ENCODE measurements at regions of chr3 and their contacts with region 1.

Region 1: DNA sequence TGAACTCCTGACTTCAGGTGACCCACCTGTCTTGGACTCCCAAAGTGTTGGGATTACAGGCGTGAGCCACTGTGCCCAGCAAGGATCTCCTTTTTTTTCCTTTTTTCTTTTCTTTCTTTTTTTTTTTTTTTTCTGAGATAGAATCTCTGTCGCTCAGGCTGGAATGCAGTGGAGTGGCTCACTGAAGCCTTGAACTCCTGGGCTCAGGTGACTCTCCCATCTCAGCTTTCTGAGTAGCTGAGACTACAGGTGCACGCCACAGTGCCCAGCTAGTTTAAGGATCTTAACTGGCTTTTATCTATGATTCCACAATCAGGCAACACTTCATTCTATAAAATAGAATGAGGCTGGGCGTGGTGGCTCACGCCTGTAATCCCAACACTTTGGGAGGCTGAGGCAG is 16.3 kb upstream of the NICN1 start:
- H3K4me3 Mint-ChIP-seq: no peak overlapping the region
- H3K27ac Mint-ChIP-seq: peak overlapping the region; percentile 86
- H3K4me1 Mint-ChIP-seq: peaks cover 25% of the 10 kb centered on the region
- H3K27me3 Mint-ChIP-seq: no peaks in the 10 kb centered on the region

Region 2: DNA sequence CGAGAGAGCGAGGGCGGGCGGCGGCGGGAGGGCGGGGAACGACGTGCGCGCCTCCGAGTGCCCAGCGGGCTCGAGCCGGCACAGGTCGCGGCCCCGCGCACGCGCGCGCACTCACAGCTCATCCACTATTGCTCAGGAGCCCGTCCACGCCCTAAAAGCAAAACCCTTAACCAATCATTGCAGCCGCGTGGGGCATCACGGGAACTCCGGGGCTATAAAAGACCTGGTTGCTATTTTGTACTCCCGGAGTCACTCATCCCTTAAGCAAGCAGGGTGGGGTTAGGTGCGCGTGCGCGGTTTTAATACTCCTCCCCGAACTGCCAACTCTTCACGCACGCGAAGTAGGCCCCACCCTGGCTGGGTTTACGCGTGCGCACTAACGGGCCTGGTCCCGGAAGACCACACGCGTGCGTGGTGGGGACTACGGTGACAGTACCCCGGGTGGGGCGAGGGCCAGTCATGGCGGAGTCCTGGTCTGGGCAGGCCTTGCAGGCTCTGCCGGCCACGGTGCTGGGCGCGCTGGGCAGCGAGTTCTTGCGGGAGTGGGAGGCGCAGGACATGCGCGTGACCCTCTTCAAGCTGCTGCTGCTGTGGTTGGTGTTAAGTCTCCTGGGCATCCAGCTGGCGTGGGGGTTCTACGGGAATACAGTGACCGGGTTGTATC is 33.3 kb before region 1 on chr3 and contains the starts of genes RHOA and TCTA:
- intact Hi-C with region 1: loop called (anchors 5 kb)
- H3K4me3 Mint-ChIP-seq: peak within 1 kb of the TSS; percentile 96
- H3K27ac Mint-ChIP-seq: peak within 1 kb of the TSS; percentile 95
- H3K4me1 Mint-ChIP-seq: peaks cover 72% of the 10 kb centered on the region
- H3K27me3 Mint-ChIP-seq: no peaks in the 10 kb centered on the region

Region 3: DNA sequence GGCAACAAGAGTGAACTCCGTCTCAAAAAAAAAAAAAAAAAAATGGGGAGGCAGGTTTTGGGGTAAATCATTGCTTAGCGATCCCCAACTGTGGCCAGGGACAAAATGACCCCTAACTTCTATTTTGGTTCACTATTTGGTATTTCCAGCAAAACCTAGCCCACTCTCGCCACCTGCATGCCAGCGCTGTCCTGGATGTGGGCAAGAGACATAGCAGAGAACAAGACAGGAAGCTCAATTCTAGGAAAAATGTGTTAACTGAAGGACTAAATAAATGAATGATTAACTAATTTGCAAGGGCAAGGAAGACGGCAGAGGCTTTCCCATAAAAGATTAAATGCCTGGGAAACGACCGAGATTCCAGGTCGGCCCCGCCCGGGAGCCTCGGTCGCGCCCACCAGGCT is 16.7 kb before region 1 on chr3:
- intact Hi-C with region 1: loop called (anchors 2 kb)
- H3K4me3 Mint-ChIP-seq: peak overlapping the region; percentile 91
- H3K27ac Mint-ChIP-seq: peak overlapping the region; percentile 99
- H3K4me1 Mint-ChIP-seq: peaks cover 11% of the 10 kb centered on the region
- H3K27me3 Mint-ChIP-seq: no peaks in the 10 kb centered on the region

Region 4: GRCh38 chr3:49493901-49494300 is 48.5 kb after region 1 on chr3:
- intact Hi-C with region 1: no loop called
- H3K4me3 Mint-ChIP-seq: no peak overlapping the region
- H3K27ac Mint-ChIP-seq: no peak overlapping the region
- H3K4me1 Mint-ChIP-seq: peaks cover 26% of the 10 kb centered on the region
- H3K27me3 Mint-ChIP-seq: no peaks in the 10 kb centered on the region

Measured in dendritic cell treated with granulocyte-macrophage colony-stimulating factor and Interleukin-4, amounts not matched to agents 40 ng/mL and 50 ng/mL, for 4 days (primary cell).